ENCODE measurements at regions of chr11 and their contacts with region 1.

Region 1: DNA sequence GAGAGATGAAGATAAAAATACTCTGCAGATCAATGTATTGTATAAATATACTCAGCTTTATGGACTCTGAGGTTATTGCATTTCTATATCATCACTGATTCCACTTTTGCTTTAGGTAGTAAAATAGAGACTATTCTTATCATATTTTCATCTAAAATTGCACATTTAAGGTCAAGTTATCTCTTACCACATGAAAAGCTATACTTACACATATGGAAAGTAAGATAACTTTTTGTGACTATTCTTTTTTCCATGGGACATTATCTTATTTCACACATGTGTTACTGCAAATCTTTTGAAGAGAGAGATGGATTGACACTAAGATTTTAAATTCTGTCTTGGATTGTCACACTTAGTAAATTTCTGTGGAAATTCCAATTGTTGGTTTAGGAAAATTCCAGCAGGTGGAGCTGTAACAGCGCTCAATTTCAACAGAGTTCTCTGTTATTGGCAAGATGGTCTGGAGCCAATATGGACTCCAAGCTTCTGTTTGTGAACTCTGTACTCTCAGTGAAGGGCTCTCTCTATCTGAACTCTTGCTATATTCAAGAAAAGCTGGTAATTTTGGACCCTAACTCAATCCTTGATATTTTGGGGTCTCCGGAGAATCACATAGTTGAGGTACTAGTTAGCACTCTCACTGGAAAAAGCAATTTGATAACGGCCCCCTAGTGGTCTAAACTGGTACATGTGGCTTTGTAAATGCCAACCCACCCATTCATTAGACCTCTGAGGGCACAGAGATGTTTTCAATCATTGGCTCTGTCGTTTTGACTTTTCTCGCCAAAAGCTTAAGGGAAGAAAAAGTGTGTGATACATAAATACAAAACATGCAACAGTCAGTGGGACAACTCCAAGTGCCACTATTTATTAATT is 429.7 kb downstream of the ETS1 start:
- DNase-seq: peak; percentile 79
- ATAC-seq: peak; percentile 93
- H3K4me3 Mint-ChIP-seq: peak overlapping the region; percentile 68
- H3K27ac Mint-ChIP-seq: peak overlapping the region; percentile 83
- H3K4me1 Mint-ChIP-seq: peaks cover 13% of the 10 kb centered on the region
- H3K27me3 Mint-ChIP-seq: peaks cover 12% of the 10 kb centered on the region

Region 2: GRCh38 chr11:128026596-128026995 is 131.1 kb before region 1 on chr11:
- CTCF ChIA-PET with region 1: interaction called, 93 read pairs
- POLR2A ChIA-PET with region 1: no interaction called
- DNase-seq: no peak
- ATAC-seq: no peak
- H3K4me3 Mint-ChIP-seq: no peak overlapping the region
- H3K27ac Mint-ChIP-seq: no peak overlapping the region
- H3K4me1 Mint-ChIP-seq: peaks cover 3% of the 10 kb centered on the region
- H3K27me3 Mint-ChIP-seq: peaks cover 41% of the 10 kb centered on the region

Region 3: DNA sequence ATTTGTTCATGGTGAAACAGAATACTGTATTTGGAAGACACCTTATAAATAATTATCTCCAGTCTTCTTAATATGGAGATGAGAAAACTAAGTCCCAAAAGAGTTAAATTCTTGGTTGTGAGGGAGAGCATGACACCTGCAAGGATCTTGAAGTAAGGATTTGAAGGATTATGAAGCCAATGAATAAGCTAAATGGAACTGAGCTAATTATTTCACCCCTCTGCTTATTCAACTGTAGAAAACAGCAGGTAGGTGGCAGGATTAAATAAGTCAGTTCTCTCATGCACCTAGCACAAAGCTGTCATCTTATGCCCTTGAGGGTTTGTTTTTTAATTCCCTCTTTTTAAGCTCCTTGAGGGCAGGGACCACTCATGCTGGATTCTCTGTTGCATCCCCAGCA is 27.6 kb before region 1 on chr11:
- CTCF ChIA-PET with region 1: interaction called, 19 read pairs
- POLR2A ChIA-PET with region 1: no interaction called
- DNase-seq: no peak
- ATAC-seq: no peak
- H3K4me3 Mint-ChIP-seq: no peak overlapping the region
- H3K27ac Mint-ChIP-seq: no peak overlapping the region
- H3K4me1 Mint-ChIP-seq: no peaks in the 10 kb centered on the region
- H3K27me3 Mint-ChIP-seq: peaks cover 2% of the 10 kb centered on the region

Region 4: GRCh38 chr11:128180446-128181087 is 22.9 kb after region 1 on chr11:
- CTCF ChIA-PET with region 1: interaction called, 176 read pairs
- POLR2A ChIA-PET with region 1: no interaction called
- DNase-seq: no peak
- ATAC-seq: no peak
- H3K4me3 Mint-ChIP-seq: no peak overlapping the region
- H3K27ac Mint-ChIP-seq: no peak overlapping the region
- H3K4me1 Mint-ChIP-seq: peaks cover 20% of the 10 kb centered on the region
- H3K27me3 Mint-ChIP-seq: peaks cover 4% of the 10 kb centered on the region

Region 5: DNA sequence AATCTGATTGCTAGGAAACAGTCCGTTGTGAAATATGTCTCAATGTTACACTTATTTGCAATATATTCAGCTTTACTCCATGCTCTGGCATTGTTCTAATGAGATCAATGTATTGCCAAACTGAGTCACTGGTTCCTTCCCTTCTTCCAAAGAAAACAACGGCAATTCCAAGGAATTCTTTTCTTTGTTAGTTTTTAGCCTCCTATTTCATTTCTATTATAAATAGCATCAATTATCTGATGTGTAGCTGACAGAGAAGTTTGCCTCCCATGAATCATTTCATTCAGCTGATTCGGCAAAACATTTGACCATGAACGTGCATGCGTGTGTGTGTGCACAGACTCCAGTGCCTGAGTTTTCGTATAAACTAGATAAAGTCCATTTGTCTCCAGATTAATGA is 82.9 kb after region 1 on chr11:
- CTCF ChIA-PET with region 1: no interaction called
- POLR2A ChIA-PET with region 1: no interaction called
- DNase-seq: no peak
- ATAC-seq: no peak
- H3K4me3 Mint-ChIP-seq: no peak overlapping the region
- H3K27ac Mint-ChIP-seq: no peak overlapping the region
- H3K4me1 Mint-ChIP-seq: peaks cover 15% of the 10 kb centered on the region
- H3K27me3 Mint-ChIP-seq: peaks cover 3% of the 10 kb centered on the region

Region 6: GRCh38 chr11:128279866-128280265 is 122.2 kb after region 1 on chr11:
- CTCF ChIA-PET with region 1: interaction called, 18 read pairs
- POLR2A ChIA-PET with region 1: no interaction called
- DNase-seq: no peak
- ATAC-seq: no peak
- H3K4me3 Mint-ChIP-seq: no peak overlapping the region
- H3K27ac Mint-ChIP-seq: no peak overlapping the region
- H3K4me1 Mint-ChIP-seq: peaks cover 3% of the 10 kb centered on the region
- H3K27me3 Mint-ChIP-seq: peaks cover 7% of the 10 kb centered on the region

Region 7: DNA sequence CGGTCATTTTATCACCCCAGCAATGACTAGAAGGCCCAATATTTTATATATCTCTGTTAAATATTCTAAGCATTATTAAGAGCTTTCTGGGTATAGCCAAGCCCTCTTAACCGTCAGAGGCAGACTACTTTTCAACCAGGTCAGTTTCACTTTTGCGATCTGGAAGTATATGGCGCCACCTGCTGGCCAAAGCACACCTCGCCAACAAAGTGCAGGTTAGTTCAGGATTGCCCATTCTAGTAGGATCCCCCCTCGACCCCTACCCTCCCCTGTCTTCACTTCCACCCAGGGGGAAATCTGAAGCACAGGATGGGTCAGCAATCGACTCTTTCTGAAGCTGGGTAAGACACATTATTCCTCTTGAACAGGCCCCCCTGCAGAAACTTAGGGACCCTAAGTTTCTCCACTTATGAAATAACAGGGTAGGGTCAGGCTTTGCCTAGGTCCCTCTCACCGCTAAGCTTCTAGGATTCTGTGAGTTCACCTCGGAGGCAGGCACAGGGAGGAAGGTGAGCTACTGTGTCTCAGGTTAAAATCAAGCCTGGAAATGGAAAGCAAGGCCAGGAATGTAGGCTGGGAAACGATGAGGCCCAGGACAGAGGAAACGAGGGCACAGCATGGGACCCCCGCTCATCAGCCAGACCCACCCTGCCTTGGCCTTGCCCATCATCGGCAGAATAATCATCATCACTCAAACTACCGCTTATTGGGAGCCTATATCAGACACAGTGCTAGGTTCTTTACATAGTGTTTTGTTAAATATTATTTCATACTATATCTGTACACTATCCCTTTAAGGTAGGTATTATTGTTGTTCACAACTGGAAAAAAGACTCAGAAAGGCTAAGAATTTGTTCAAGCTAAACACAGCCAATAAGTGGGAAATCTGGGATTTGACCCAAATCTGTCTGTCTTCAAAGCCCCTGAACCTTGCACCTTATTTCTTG is 673.8 kb after region 1 on chr11:
- CTCF ChIA-PET with region 1: interaction called, 51 read pairs
- POLR2A ChIA-PET with region 1: no interaction called
- DNase-seq: peak; percentile 91
- ATAC-seq: peak; percentile 85
- H3K4me3 Mint-ChIP-seq: peak overlapping the region; percentile 58
- H3K27ac Mint-ChIP-seq: peak overlapping the region; percentile 66
- H3K4me1 Mint-ChIP-seq: peaks cover 30% of the 10 kb centered on the region
- H3K27me3 Mint-ChIP-seq: peaks cover 2% of the 10 kb centered on the region

Measured in activated CD8-positive, alpha-beta T cell treated with anti-CD3 and anti-CD28 coated beads, Interleukin-2, amount 10 ng/mL, durations not matched to agents 7 days and 5 days (primary cell).